Sigmoid colon (tissue), 7 donors: ENCODE measurements at regions of chr9 and their contacts with region 1.

Region 1: GRCh38 chr9:92506184-92506857 is 24.0 kb upstream of the ASPN start:
- DNase-seq: peak; percentile 75
- H3K4me3 ChIP-seq: no peak overlapping the region
- H3K27ac ChIP-seq: peak overlapping the region; percentile 72 to 88 (median 82)
- H3K4me1 ChIP-seq: peaks cover 0 to 78% (median 70%) of the 10 kb centered on the region in 4 donors
- H3K27me3 ChIP-seq: no peaks in the 10 kb centered on the region
- CTCF ChIP-seq: no peak
- EP300 ChIP-seq: no peak
- POLR2A ChIP-seq: no peak

Region 2: DNA sequence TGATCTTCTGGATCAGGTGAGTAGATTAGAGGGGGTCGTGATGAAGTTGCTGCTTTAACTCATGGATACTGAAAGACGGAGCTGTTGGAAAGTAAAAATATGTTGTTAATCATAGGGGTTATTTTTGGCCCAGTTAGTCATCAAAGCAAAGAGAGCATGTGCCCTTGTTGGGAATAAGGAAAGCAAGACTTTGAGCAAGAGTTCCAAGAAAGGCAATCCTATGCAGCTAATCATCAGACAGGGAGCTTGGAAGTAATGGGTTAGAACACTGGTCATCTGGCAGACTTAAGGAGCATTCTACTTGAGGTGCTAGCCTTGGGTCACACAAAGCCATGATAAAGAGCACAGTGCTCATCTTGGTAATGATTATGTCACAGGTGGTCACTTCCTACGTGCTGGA is 42.3 kb before region 1 on chr9:
- intact Hi-C with region 1: loop called (anchors 2 kb)
- DNase-seq: no peak
- H3K4me3 ChIP-seq: no peak overlapping the region
- H3K27ac ChIP-seq: peak overlapping the region; percentile 68 to 86 (median 85)
- H3K4me1 ChIP-seq: peaks cover 0 to 35% (median 26%) of the 10 kb centered on the region in 4 donors
- H3K27me3 ChIP-seq: no peaks in the 10 kb centered on the region
- CTCF ChIP-seq: no peak
- EP300 ChIP-seq: peak in 3 of 4 donors; percentile 13 to 71 (median 59)
- POLR2A ChIP-seq: no peak

Region 3: GRCh38 chr9:92600462-92601261 is 94.3 kb after region 1 on chr9:
- intact Hi-C with region 1: no loop called
- DNase-seq: no peak
- H3K4me3 ChIP-seq: no peak overlapping the region
- H3K27ac ChIP-seq: peak overlapping the region; percentile 48 to 80 (median 74)
- H3K4me1 ChIP-seq: peaks cover 0 to 38% (median 25%) of the 10 kb centered on the region in 4 donors
- H3K27me3 ChIP-seq: no peaks in the 10 kb centered on the region
- CTCF ChIP-seq: no peak
- EP300 ChIP-seq: no peak
- POLR2A ChIP-seq: no peak